PC-3 (cell line): ENCODE measurements at regions of chr1 and their contacts with region 1.

Region 1: GRCh38 chr1:241828463-241829021 is 19.5 kb upstream of the EXO1 start:
- DNase-seq: peak; percentile 82
- ATAC-seq: peak; percentile 100
- H3K4me3 ChIP-seq: no peak overlapping the region
- H3K27ac ChIP-seq: no peak overlapping the region
- H3K4me1 ChIP-seq: peaks cover 15% of the 10 kb centered on the region
- H3K27me3 ChIP-seq: no peaks in the 10 kb centered on the region
- CTCF ChIP-seq: no peak

Region 2: DNA sequence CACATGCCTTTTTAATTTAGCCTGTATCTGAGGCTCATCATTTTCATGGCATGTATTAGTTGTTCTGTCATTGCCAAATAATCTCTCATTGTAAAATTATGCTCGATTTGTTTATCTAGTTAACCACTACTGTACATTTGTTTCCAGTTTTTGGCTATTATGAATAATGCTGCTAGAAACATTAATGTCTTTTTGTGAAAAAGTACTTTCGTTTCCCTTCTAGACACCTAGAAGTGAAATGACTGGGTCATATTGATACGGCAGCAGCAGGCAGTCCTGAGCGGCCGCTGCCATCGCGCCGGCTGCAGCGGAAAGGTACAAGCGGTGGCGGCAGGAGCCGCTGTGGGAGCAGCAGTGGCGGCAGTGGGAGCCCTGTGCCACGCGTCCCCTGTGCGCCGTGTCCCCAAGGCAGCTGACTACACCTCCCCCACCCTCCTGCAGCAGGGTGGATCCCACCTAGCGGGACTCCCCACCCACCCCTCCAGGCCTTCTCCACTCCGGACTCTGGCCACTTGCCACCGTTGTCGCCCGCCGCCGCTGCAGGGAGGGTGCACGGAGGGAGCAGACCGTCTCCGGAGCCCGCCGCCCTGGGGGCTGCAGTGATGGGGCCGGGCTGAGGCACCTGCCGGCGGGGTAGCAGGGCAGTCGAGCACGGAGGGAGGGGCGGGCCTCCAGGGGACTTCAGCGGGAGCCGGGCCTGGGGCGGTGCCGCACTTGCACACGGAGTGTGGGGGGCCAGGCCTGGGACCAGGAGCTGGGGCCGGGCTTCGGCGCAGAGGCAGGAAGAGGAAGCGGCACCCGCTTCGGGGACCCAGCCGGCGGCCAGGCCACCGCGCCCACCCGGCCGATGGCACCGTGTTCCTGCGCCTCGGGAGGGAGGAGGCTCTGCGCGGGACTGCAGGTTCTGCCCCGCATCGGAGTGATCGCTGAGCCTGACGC is 404.7 kb before region 1 on chr1:
- CTCF ChIA-PET with region 1: no interaction called
- POLR2A ChIA-PET with region 1: no interaction called
- intact Hi-C with region 1: loop called (anchors 10 kb)
- DNase-seq: peak; percentile 74
- ATAC-seq: peak; percentile 87
- H3K4me3 ChIP-seq: peak overlapping the region; percentile 78
- H3K27ac ChIP-seq: no peak overlapping the region
- H3K4me1 ChIP-seq: peaks cover 24% of the 10 kb centered on the region
- H3K27me3 ChIP-seq: no peaks in the 10 kb centered on the region
- CTCF ChIP-seq: peak; percentile 70

Region 3: GRCh38 chr1:241810769-241811405 is 17.7 kb before region 1 on chr1:
- CTCF ChIA-PET with region 1: no interaction called
- POLR2A ChIA-PET with region 1: no interaction called
- intact Hi-C with region 1: no loop called
- DNase-seq: no peak
- ATAC-seq: no peak
- H3K4me3 ChIP-seq: no peak overlapping the region
- H3K27ac ChIP-seq: no peak overlapping the region
- H3K4me1 ChIP-seq: peaks cover 12% of the 10 kb centered on the region
- H3K27me3 ChIP-seq: no peaks in the 10 kb centered on the region
- CTCF ChIP-seq: no peak